IMR-90 (cell line): ENCODE measurements at regions of chr1 and their contacts with region 1.

Region 1: DNA sequence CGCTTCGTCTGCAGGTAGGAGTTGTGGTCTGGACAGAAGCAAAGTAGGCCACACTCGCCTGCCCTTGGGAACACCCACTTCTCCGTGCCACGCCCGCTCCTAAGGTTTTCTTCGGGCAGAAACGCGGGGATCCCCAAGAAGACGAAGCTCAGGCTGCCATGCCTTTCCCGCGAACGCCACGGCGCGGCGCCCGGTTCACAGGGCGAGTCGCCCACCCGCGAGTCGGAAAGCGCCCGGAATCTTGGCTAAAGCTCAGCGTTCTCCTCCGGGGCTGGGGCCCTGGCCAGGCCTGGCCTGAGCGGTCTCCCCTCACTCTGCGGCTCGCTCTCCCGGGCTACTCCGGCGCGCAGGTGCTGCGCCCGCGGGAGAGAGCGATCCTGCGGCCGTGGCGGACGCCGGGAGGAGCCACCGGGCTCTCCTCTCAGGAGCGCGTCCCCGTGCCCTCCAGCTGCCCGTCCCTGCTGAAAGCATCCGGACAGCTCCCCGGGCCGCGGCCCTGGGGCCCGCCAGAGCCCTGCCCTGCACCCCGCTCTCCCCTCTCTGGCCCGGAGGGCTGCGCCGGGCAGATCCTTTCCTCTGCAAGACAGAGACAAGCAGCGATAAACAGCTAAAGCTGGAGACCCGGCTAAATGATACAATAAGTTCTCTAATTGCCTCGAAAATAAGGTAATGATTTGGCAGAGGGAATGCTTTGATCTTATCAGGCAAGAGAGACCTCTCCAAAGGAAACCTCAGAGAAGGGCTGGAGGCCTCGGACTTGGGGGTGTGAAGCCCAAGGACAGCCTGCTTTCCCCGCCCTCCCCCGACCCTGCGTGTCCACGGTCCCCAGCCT is 6.7 kb upstream of the WNT2B start:
- DNase-seq: peak; percentile 54
- ATAC-seq: peak; percentile 89
- H3K4me3 ChIP-seq: peak overlapping the region; percentile 40
- H3K27ac ChIP-seq: no peak overlapping the region; the same call in 1 of the 2 replicates
- H3K4me1 ChIP-seq: peaks cover 6% of the 10 kb centered on the region; the same call in 1 of the 2 replicates
- H3K27me3 ChIP-seq: peaks cover 27% of the 10 kb centered on the region
- CTCF ChIP-seq: peak; percentile 73
- POLR2A ChIP-seq: no peak
- RAD21 ChIP-seq: peak; percentile 77

Region 2: GRCh38 chr1:112317140-112317539 is 184.9 kb before region 1 on chr1:
- CTCF ChIA-PET with region 1: no interaction called
- POLR2A ChIA-PET with region 1: no interaction called
- dilution Hi-C with region 1: no loop called
- in situ Hi-C with region 1: no loop called
- intact Hi-C with region 1: no loop called
- DNase-seq: no peak
- ATAC-seq: peak; percentile 44; the same call in 1 of the 2 replicates
- H3K4me3 ChIP-seq: no peak overlapping the region
- H3K27ac ChIP-seq: no peak overlapping the region
- H3K4me1 ChIP-seq: no peaks in the 10 kb centered on the region
- H3K27me3 ChIP-seq: peaks cover 28% of the 10 kb centered on the region
- CTCF ChIP-seq: no peak
- POLR2A ChIP-seq: no peak
- RAD21 ChIP-seq: no peak

Region 3: DNA sequence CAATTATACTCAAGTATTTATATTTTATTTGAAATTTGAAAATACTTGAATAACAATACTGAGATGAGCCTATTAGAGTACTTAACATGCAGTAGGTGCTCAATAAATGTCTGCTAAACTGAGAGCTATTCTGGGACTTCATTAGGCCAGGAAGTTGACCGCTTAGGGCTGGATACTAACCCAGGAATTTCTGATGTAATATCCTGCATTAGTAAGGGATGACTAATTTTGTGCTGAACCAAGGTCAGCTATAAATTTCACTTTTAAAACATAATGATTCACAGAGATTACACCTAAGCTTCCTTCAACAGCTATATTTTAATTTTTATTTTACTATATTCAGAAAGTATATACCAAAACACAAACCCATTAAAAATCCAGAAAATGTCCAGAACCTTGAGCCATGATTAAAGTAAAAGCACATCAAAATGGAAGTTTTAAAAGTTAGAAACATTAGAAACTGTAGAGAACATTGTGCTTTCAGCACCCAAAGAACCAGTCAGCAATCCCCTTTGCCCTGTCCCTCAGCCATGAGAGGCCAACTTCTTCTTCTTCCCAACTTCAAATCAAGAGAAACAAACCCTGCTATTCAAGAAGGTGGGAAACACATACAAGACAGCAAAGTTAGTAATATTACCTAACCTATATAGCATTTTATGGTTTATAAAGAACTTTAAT is 42.1 kb after region 1 on chr1:
- CTCF ChIA-PET with region 1: interaction called, 4 read pairs
- POLR2A ChIA-PET with region 1: no interaction called
- dilution Hi-C with region 1: no loop called
- in situ Hi-C with region 1: no loop called
- intact Hi-C with region 1: loop called (anchors 2 kb)
- DNase-seq: peak; percentile 95
- ATAC-seq: peak; percentile 82
- H3K4me3 ChIP-seq: no peak overlapping the region
- H3K27ac ChIP-seq: peak overlapping the region; percentile 81
- H3K4me1 ChIP-seq: peaks cover 5% of the 10 kb centered on the region; the same call in 1 of the 2 replicates
- H3K27me3 ChIP-seq: no peaks in the 10 kb centered on the region
- CTCF ChIP-seq: no peak
- POLR2A ChIP-seq: no peak
- RAD21 ChIP-seq: no peak

Region 4: GRCh38 chr1:112614460-112615065 is 112.5 kb after region 1 on chr1:
- CTCF ChIA-PET with region 1: interaction called, 18 read pairs
- POLR2A ChIA-PET with region 1: interaction called, 3 read pairs
- dilution Hi-C with region 1: no loop called
- in situ Hi-C with region 1: loop called (anchors 5 kb)
- intact Hi-C with region 1: loop called (anchors 1 kb)
- DNase-seq: peak; percentile 64
- ATAC-seq: peak; percentile 19; the same call in 1 of the 2 replicates
- H3K4me3 ChIP-seq: no peak overlapping the region
- H3K27ac ChIP-seq: no peak overlapping the region
- H3K4me1 ChIP-seq: no peaks in the 10 kb centered on the region
- H3K27me3 ChIP-seq: no peaks in the 10 kb centered on the region
- CTCF ChIP-seq: peak; percentile 82
- POLR2A ChIP-seq: 0 out of 2 replicates have a peak, but pooled peaks have one; percentile 41
- RAD21 ChIP-seq: peak; percentile 80

Region 5: DNA sequence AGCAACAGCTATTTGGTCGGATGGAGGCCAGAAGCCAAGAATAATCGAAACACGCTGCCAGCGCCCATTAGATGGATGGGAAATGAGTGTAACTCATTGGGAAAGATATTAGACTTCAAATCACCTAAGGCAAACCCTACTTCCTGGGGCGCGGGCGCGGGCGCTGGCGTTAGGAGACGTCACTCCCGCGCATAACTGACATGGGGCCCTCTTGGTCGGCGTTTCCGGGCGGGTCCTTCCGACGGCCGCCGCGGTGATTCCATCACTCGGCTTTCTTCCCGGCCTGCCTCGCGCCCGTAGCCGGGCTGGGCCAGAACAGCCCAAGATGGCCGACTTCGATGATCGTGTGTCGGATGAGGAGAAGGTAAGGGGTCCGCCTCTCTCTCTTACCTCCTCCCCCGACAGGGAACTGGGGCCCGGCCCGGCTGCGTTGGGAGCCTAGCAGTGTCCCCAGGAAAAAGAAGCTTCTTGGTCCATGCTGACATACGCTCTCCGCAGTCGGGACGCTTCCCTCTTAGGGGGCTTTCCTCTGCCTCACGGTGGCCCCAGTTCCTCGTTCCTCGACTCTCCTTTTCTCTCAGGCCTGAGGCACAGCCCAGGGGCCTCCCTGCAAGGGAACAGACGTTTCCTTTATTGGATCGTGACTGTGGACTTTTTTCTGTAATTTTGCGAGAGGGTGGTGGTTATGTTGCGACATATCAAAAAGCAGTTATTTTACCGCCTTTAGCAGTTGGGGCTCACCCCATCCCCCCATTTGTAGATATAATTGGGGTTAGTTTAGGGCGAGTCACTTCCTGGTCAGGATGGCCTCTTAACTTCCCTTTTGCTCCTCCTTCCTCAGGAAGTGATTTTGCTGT is 117.7 kb after region 1 on chr1 and contains the start of gene CAPZA1:
- CTCF ChIA-PET with region 1: interaction called, 18 read pairs
- POLR2A ChIA-PET with region 1: no interaction called
- dilution Hi-C with region 1: no loop called
- in situ Hi-C with region 1: loop called (anchors 5 kb)
- intact Hi-C with region 1: loop called (anchors 1 kb)
- DNase-seq: peak; percentile 90
- ATAC-seq: peak; percentile 93
- H3K4me3 ChIP-seq: peak within 1 kb of the TSS; percentile 86
- H3K27ac ChIP-seq: peak within 1 kb of the TSS; percentile 99
- H3K4me1 ChIP-seq: no peaks in the 10 kb centered on the region
- H3K27me3 ChIP-seq: no peaks in the 10 kb centered on the region
- CTCF ChIP-seq: no peak
- POLR2A ChIP-seq: peak; percentile 93
- RAD21 ChIP-seq: no peak
- total RNA-seq, gene CAPZA1: 262 and 440 TPM in 2 replicates

Region 6: GRCh38 chr1:112715264-112716053 is 213.4 kb after region 1 on chr1 and contains the start of gene PPM1J:
- CTCF ChIA-PET with region 1: no interaction called
- POLR2A ChIA-PET with region 1: no interaction called
- dilution Hi-C with region 1: no loop called
- in situ Hi-C with region 1: no loop called
- intact Hi-C with region 1: no loop called
- DNase-seq: peak; percentile 83
- ATAC-seq: peak; percentile 79
- H3K4me3 ChIP-seq: peak within 1 kb of the TSS; percentile 68
- H3K27ac ChIP-seq: no peak within 1 kb of the TSS
- H3K4me1 ChIP-seq: no peaks in the 10 kb centered on the region
- H3K27me3 ChIP-seq: peaks cover 7% of the 10 kb centered on the region; the same call in 1 of the 2 replicates
- CTCF ChIP-seq: no peak
- POLR2A ChIP-seq: no peak
- RAD21 ChIP-seq: no peak
- total RNA-seq, gene PPM1J: 1.4 and 1.8 TPM in 2 replicates

Region 7: GRCh38 chr1:114152508-114153260 is 1650.7 kb after region 1 on chr1:
- CTCF ChIA-PET with region 1: no interaction called
- POLR2A ChIA-PET with region 1: no interaction called
- dilution Hi-C with region 1: no loop called
- in situ Hi-C with region 1: no loop called
- intact Hi-C with region 1: no loop called
- DNase-seq: peak; percentile 24
- ATAC-seq: peak; percentile 88
- H3K4me3 ChIP-seq: no peak overlapping the region; the same call in 1 of the 2 replicates
- H3K27ac ChIP-seq: no peak overlapping the region
- H3K4me1 ChIP-seq: no peaks in the 10 kb centered on the region; the same call in 1 of the 2 replicates
- H3K27me3 ChIP-seq: peaks cover 80% of the 10 kb centered on the region
- CTCF ChIP-seq: no peak
- POLR2A ChIP-seq: no peak
- RAD21 ChIP-seq: no peak